ENCODE measurements at regions of chr19 and their contacts with region 1.

Region 1: GRCh38 chr19:15555759-15556633 is 47.7 kb downstream of the CYP4F22 start:
- DNase-seq: peak; percentile 73
- ATAC-seq: peak; percentile 96
- H3K4me3 ChIP-seq: peak overlapping the region; percentile 35 to 65
- H3K27ac ChIP-seq: no peak overlapping the region
- H3K4me1 ChIP-seq: no peaks in the 10 kb centered on the region
- H3K27me3 ChIP-seq: no peaks in the 10 kb centered on the region; the same call in 1 of the 2 replicates
- CTCF ChIP-seq: peak; percentile 87

Region 2: GRCh38 chr19:15418588-15419412 is 137.2 kb before region 1 on chr19 and contains the start of gene AKAP8L:
- CTCF ChIA-PET with region 1: interaction called, 23 read pairs
- POLR2A ChIA-PET with region 1: no interaction called
- in situ Hi-C with region 1: no loop called
- intact Hi-C with region 1: loop called (anchors 5 kb)
- DNase-seq: peak; percentile 96
- ATAC-seq: peak; percentile 96
- H3K4me3 ChIP-seq: peak within 1 kb of the TSS; percentile 94 to 97
- H3K27ac ChIP-seq: peak within 1 kb of the TSS; percentile 89
- H3K4me1 ChIP-seq: peaks cover 13% of the 10 kb centered on the region
- H3K27me3 ChIP-seq: no peaks in the 10 kb centered on the region
- CTCF ChIP-seq: peak; percentile 70; the same call in 1 of the 2 replicates
- total RNA-seq, gene AKAP8L: 65.5 TPM